OCI-LY7 (cell line): ENCODE measurements at regions of chr12 and their contacts with region 1.

Region 1: DNA sequence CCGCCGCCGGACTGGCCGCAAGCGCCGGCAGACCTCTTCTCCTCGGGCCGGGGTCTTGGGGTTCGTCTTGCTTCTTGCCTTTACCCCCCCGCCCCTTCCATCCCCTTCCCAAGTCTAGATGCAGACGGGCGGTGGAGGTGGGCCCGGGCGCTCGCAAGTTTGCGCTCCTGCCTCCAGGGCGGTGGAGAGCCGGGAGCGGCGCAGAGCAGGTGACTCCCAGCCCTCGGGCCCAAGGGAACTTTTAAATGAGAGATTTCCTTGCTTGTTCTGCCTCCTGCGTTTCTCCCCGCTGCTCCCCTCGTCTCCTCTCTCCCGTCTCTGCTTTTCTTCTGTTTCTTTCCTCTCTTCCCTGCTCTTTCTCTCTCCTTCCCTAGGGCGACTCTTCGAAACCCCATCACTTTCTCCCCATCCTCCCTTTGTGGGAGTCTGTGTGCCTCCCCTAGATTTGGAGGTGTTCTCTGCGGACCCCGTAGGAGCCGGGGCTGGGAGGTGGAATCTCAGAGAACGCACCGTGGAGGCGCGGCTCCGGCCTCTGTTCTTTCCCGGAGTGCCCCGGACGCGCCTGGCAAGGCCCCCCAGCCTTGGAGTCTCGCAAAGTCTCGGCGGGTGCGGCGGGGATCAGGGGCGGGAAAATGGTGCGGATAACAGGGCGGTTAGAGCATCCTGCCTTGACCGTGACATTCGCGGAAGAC is 114.7 kb upstream of the MYL2 start:
- DNase-seq: no peak
- H3K4me3 ChIP-seq: no peak overlapping the region
- H3K27ac ChIP-seq: no peak overlapping the region
- H3K4me1 ChIP-seq: peaks cover 19% of the 10 kb centered on the region
- CTCF ChIP-seq: no peak

Region 2: GRCh38 chr12:111102062-111102739 is 67.2 kb after region 1 on chr12:
- CTCF ChIA-PET with region 1: no interaction called
- POLR2A ChIA-PET with region 1: no interaction called
- intact Hi-C with region 1: loop called (anchors 5 kb)
- DNase-seq: peak; percentile 62
- H3K4me3 ChIP-seq: peak overlapping the region; percentile 71
- H3K27ac ChIP-seq: peak overlapping the region; percentile 68
- H3K4me1 ChIP-seq: peaks cover 50% of the 10 kb centered on the region
- CTCF ChIP-seq: no peak

Region 3: DNA sequence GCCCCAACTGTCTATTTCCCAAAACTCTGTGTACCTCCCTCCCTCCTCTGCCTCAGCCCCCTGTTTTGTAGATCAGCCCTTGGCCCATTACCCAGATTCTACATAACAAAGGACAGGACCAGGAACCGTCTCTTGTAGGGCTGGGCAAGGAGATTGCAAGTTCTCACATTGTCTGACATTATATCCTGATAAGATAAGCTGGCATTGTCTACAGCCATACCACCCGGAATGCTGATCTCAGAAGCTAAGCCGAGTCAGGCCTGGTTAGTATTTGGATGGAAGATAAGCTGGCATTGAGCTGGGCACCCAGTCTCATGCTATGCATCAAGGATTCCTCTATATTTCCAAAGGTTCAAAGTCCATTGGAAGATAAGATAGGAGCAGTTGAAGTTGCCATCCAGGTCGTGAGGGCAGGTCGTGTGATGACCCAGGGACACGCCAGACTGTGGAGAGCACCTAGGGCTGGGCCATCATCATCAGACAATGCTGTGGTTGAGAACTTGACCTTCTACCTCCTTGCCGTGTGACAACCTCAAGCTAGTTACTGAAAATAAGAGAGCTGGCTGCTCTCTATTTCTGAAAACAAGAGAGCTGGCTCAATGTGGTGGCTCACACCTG is 304.4 kb after region 1 on chr12:
- CTCF ChIA-PET with region 1: no interaction called
- POLR2A ChIA-PET with region 1: no interaction called
- intact Hi-C with region 1: no loop called
- DNase-seq: no peak
- H3K4me3 ChIP-seq: no peak overlapping the region
- H3K27ac ChIP-seq: no peak overlapping the region
- H3K4me1 ChIP-seq: no peaks in the 10 kb centered on the region
- CTCF ChIP-seq: no peak